ENCODE measurements at regions of chr13 and their contacts with region 1.

Region 1: GRCh38 chr13:98440390-98441055 is 136.4 kb downstream of the STK24 start:
- DNase-seq: no peak

Region 2: DNA sequence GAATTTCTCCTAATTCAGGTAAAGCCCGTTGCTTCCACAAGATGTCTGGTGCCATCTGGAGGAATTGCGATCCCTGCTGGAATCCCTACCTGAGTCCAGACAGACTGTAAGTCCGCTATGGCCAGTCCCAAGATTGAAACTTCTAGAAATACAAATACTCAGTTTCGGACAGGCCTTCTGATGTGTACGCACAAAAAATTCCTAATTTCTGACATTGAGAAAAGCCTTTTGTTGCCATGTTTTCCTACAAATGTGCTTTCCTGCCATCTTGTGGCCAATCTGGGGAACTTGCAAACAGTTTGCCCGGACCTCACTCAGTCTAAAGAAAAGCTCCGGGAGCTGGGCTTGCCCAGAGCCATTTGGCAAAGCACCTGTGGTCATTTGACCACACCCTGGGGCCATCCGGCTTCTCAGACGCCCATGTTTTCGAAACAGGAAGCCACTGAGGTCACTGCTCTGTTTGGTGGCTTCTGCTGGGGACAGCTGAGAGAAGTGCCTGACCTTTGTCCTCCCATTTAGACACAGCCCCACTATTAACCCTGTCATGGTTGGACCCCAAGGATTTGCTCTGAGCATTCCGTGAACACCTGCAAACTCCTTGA is 232.5 kb after region 1 on chr13:
- intact Hi-C with region 1: loop called (anchors 1 to 5 kb)
- DNase-seq: no peak